Panc1 (cell line): ENCODE measurements at regions of chr1 and their contacts with region 1.

Region 1: DNA sequence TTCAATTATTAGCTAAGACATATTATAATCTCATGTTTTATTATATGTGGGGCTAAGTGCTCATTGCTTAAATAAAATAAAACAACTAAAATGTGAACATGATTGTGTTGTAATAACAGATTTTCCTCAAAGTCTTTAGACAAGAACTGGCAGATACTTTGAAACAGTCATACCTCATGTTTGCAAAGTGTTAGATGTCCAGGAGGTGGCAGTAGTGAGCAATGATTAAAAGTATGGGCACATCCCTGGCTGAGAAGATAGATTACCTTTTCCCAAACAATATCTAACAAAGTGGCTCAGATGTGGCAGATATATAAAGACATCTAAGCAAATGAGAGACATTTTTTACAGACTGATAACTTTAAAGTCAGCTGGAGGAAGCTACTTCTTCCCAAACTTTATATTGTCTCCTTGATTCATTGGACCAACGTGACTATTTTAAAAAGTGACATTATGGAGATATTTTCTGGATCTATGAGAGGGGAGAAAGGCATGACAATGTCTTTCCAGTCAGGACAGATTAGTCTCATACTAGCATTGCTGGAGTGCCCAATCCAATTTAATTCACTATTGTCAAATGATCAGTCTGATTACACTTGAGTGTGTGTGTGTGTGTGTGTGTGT is 269.8 kb downstream of the S1PR1 start:
- DNase-seq: peak; percentile 8
- ATAC-seq: no peak
- H3K4me3 ChIP-seq: no peak overlapping the region
- H3K27ac ChIP-seq: no peak overlapping the region
- H3K4me1 ChIP-seq: no peaks in the 10 kb centered on the region
- H3K27me3 ChIP-seq: no peaks in the 10 kb centered on the region
- CTCF ChIP-seq: peak; percentile 55; the same call in 1 of the 2 replicates

Region 2: GRCh38 chr1:102191723-102192122 is 685.1 kb after region 1 on chr1:
- CTCF ChIA-PET with region 1: interaction called, 3 read pairs
- POLR2A ChIA-PET with region 1: no interaction called
- in situ Hi-C with region 1: no loop called
- intact Hi-C with region 1: loop called (anchors 5 kb)
- DNase-seq: peak; percentile 2
- ATAC-seq: peak; percentile 65; the same call in 1 of the 2 replicates
- H3K4me3 ChIP-seq: no peak overlapping the region
- H3K27ac ChIP-seq: no peak overlapping the region
- H3K4me1 ChIP-seq: no peaks in the 10 kb centered on the region
- H3K27me3 ChIP-seq: no peaks in the 10 kb centered on the region
- CTCF ChIP-seq: peak; percentile 35; the same call in 1 of the 2 replicates